ENCODE measurements at regions of chr3 and their contacts with region 1.

Region 1: DNA sequence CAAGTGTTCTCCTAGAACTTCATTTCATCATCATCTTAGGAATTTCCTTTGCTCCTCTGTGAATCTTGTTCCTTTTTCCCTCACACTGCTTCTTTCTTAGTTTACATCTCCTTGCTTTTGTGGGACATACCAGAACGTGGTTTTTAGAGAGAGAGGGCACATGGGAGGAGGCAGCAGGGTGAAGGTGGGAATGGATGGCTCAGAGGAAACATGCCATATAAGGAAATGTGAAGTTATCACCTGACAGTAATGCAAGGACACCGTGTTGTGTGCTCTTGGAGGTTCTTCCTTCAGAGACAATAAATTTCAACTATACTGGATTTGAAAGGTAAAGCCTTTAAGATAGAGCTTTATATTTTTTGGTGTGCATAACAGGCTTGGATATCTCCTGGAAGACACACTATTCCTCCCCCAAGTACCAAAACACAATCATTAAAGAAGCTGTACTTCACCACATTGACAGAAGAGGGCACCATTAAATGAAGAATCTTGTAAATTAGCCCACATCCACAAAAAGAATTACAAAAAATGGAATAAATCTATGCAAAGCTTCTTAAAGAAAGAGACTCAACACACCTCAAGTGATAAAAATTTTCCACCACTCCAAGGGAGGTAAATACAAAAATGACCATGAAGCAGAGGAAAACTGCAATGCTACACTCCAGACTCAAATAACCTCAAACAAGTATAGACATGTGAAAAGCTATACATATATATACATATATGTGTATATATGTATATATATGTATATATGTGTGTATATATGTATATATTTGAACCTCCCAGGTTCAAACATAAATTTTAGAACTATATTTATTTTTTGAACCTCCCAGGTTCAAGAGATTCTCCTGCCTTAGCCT is 26.1 kb downstream of the RPL39L start:
- DNase-seq: peak; percentile 63
- H3K4me3 Mint-ChIP-seq: no peak overlapping the region
- H3K27ac Mint-ChIP-seq: no peak overlapping the region
- H3K4me1 Mint-ChIP-seq: peaks cover 9% of the 10 kb centered on the region
- H3K27me3 Mint-ChIP-seq: no peaks in the 10 kb centered on the region
- CTCF ChIP-seq: peak; percentile 68

Region 2: DNA sequence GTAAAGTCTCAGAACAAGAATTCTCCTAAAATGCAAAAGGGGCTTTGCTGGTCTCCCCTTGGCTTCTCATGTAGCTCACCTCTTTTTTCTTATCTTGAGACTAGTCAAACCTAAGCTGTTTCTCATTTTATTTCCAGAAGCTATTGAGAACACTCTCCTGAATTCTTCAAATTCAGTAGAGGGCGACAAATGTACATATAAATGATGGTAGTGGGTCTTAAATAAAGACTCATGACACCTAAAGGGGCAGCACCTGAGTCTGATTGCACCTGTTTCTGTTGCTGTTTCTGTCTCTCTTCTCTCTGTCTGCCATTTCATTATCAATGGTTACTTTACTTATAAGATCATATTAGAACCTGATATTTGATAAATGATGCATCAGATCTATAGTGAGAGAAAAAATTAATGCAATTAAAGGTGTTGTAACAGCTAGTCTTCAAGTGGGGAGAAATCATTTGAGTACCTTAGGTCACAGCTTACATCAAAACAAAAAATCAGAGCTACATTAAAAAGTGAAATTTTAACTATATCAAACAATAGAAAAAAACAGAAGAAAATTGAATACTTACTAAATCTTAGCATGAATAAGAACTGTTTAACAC is 263.7 kb before region 1 on chr3:
- CTCF ChIA-PET with region 1: interaction called, 14 read pairs
- POLR2A ChIA-PET with region 1: interaction called, 5 read pairs
- intact Hi-C with region 1: loop called (anchors 1 kb)
- DNase-seq: peak; percentile 55
- H3K4me3 Mint-ChIP-seq: no peak overlapping the region
- H3K27ac Mint-ChIP-seq: no peak overlapping the region
- H3K4me1 Mint-ChIP-seq: no peaks in the 10 kb centered on the region
- H3K27me3 Mint-ChIP-seq: peaks cover 29% of the 10 kb centered on the region
- CTCF ChIP-seq: peak; percentile 47

Region 3: DNA sequence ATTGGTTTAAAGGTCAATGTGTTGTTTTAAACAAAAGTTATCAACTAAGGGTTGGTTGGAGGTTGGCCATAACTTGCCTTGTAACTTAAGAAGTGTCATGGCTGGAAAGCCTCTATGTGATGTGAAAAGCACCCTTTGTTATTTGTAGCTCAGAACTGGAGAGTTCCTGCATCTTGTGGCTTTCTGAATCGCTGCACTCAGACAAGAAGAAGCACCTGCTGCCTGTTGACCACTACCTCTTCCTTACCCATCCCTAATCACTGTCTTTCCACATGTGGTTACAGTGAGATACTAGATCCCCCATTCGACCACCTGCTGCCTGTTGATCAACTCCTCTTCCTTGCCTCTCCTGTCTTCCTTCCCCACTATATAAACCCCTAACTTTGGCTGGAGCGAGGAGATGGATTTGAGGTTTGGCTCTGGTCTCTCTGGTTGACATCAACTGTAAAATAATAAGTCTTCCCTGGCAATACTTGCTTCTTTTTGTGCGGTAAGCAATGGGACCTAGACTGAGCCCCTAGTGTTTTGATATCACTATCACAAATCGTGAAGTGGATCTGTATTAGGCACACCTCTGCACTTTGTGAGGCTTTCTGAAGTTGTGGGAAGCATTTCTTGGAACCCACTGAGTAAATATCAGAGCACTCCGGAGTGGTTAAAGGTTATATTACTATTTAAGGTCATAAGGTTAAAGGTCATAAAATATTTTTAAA is 12.3 kb after region 1 on chr3:
- CTCF ChIA-PET with region 1: interaction called, 18 read pairs
- POLR2A ChIA-PET with region 1: interaction called, 5 read pairs
- intact Hi-C with region 1: loop called (anchors 2 kb)
- DNase-seq: no peak
- H3K4me3 Mint-ChIP-seq: no peak overlapping the region
- H3K27ac Mint-ChIP-seq: no peak overlapping the region
- H3K4me1 Mint-ChIP-seq: peaks cover 4% of the 10 kb centered on the region
- H3K27me3 Mint-ChIP-seq: no peaks in the 10 kb centered on the region
- CTCF ChIP-seq: no peak

Region 4: GRCh38 chr3:187139126-187139894 is 26.1 kb after region 1 on chr3 and contains the start of gene RPL39L:
- CTCF ChIA-PET with region 1: interaction called, 20 read pairs
- POLR2A ChIA-PET with region 1: no interaction called
- intact Hi-C with region 1: no loop called
- DNase-seq: peak; percentile 58
- H3K4me3 Mint-ChIP-seq: peak within 1 kb of the TSS; percentile 66
- H3K27ac Mint-ChIP-seq: no peak within 1 kb of the TSS
- H3K4me1 Mint-ChIP-seq: no peaks in the 10 kb centered on the region
- H3K27me3 Mint-ChIP-seq: no peaks in the 10 kb centered on the region
- CTCF ChIP-seq: peak; percentile 47
- total RNA-seq, gene RPL39L: 1.0 and 3.3 TPM in 2 replicates

Region 5: DNA sequence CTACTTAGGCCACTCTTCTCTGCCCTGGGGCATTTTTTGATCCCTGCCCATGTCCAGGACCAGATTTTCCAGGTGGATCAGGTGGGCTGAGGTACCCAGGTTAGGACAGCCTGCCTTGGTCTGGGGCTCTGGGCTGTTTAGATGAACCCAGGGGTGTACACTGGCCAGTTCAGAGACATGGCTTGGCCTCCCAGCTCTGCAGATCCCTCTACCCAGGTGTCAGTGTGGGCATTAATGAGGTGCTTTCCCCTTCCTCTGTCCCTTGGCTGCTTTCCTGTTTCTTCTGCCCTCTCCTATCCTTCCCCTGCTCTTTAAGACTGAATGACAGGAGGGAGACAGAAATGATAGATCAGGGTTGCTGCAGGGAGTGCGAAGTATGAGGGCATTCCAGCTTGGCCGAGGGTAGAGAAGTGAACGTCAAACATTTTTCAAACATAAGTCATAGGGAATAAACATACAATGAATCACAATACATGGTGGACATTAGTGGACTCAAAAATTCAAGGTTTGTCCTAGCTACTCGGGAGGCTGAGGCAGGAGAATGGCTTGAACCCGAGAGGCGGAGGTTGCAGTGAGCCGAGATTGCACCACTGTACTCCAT is 114.6 kb after region 1 on chr3:
- CTCF ChIA-PET with region 1: interaction called, 3 read pairs
- POLR2A ChIA-PET with region 1: no interaction called
- intact Hi-C with region 1: loop called (anchors 5 kb)
- DNase-seq: peak; percentile 45
- H3K4me3 Mint-ChIP-seq: no peak overlapping the region
- H3K27ac Mint-ChIP-seq: no peak overlapping the region
- H3K4me1 Mint-ChIP-seq: peaks cover 27% of the 10 kb centered on the region
- H3K27me3 Mint-ChIP-seq: no peaks in the 10 kb centered on the region
- CTCF ChIP-seq: no peak